Heart left ventricle (tissue), 16 donors: ENCODE measurements at regions of chr2 and their contacts with region 1.

Region 1: GRCh38 chr2:217142649-217143266 is 282.9 kb upstream of the TNP1 start:
- DNase-seq: no peak
- ATAC-seq: no peak
- H3K4me3 ChIP-seq: no peak overlapping the region
- H3K27ac ChIP-seq: no peak overlapping the region
- H3K4me1 ChIP-seq: no peaks in the 10 kb centered on the region
- H3K27me3 ChIP-seq: no peaks in the 10 kb centered on the region
- CTCF ChIP-seq: peak in 9 of 12 donors; percentile 19 to 44 (median 39)
- POLR2A ChIP-seq: no peak

Region 2: DNA sequence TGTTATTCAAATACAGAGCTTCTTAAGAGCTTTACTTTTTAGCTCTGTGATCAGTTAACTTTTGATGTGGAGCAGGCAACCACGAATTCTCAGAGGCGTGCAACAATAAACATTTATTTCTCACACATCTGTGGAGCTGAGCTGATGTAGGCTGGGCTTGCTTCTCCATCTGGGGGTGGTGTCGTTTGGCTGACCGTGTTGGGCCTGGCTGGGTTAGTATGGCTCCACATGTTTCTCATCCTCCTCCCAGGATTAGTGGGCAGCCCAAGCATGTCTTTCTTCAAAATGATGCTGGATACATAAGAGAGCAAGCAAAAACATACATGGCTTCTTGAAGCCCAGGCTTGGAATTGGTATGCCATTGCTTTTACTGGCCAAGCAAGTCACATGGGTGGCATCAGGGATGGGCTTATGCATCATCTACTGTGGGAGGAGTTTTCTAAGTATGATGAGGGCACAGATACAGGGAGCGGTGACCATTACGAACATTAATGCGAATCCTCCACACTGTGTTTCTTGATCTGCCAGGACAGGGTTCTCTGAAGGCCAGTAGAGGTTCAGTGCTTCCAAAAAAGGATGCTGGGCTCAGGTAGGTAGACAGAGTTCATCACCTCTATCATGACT is 125.8 kb before region 1 on chr2:
- intact Hi-C with region 1: loop called in 1 of 10 experiments (anchors 10 kb)
- DNase-seq: peak in 2 of 5 donors; percentile 40 to 45
- ATAC-seq: peak in 3 of 4 donors; percentile 56 to 82 (median 76)
- H3K4me3 ChIP-seq: no peak overlapping the region
- H3K27ac ChIP-seq: peak overlapping the region in 3 of 12 donors; percentile 2 to 35 (median 10)
- H3K4me1 ChIP-seq: peaks cover 0 to 3% (median 0%) of the 10 kb centered on the region in 12 donors
- H3K27me3 ChIP-seq: no peaks in the 10 kb centered on the region
- CTCF ChIP-seq: no peak
- POLR2A ChIP-seq: no peak